ENCODE measurements at regions of chr5 and their contacts with region 1.

Region 1: GRCh38 chr5:132426525-132427138 is 57.1 kb downstream of the SLC22A5 start:
- DNase-seq: peak; percentile 91
- H3K4me3 Mint-ChIP-seq: peak overlapping the region; percentile 81
- H3K27ac Mint-ChIP-seq: peak overlapping the region; percentile 96
- H3K4me1 Mint-ChIP-seq: peaks cover 92% of the 10 kb centered on the region
- H3K27me3 Mint-ChIP-seq: no peaks in the 10 kb centered on the region

Region 2: DNA sequence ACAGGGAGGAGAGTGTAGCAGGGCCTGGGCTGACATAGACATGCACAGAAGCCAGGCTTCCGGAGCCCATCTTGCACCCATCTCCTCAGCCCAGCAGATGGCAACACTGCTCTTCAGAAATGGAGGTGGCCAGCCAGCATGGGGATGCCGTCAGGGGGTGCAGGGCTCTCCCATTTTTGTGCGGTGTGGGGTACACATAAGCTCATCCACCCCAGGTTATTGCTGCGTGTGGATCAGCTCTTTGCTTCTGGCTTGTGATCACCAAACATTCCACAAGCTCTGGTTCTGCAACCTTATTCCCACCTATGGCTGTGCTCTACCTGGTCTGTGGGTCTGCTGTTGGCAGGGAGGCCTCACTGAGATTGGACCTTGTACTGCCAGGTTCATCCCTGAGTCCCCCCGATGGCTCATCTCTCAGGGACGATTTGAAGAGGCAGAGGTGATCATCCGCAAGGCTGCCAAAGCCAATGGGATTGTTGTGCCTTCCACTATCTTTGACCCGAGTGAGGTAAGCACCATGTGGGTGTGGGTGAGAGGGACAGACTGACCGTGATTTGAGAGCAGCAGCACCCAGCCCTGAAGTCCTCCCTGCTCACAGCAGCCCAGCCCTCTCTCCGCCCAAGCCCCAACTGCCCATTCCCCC is 39.9 kb before region 1 on chr5:
- intact Hi-C with region 1: loop called (anchors 1 kb)
- DNase-seq: peak; percentile 93
- H3K4me3 Mint-ChIP-seq: no peak overlapping the region
- H3K27ac Mint-ChIP-seq: no peak overlapping the region
- H3K4me1 Mint-ChIP-seq: peaks cover 51% of the 10 kb centered on the region
- H3K27me3 Mint-ChIP-seq: no peaks in the 10 kb centered on the region

Region 3: DNA sequence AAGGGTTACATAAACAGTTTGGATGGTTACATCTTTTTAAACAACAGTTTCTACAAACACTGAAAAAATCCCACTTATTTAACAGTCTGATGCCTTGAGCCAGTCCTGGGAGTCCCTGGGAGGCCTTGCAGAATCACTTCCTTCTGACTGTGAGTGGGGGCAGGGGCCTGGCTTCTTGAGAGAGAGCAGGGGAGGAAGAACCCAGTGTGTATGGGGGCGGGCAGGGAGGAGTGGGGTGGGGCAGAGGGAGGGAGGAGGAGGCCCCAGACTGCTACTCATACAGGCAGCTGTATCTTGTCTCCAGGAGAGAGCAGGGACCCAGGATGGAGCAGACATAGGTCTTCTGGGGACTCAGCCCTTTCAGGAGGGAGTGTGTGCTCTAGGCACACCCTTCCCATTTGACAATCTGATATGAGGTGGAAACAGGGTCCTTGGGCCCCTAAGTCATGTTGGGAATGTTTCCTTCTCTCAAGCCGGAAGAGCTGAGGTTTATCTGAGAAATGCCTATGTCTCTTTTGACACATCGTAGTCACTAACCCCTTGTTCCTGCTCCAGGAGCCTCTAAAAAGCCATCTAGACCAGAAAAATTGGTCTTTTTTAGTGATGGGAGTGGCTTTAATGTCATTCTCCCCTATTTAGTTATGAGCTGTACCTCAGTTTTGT is 11.1 kb after region 1 on chr5:
- intact Hi-C with region 1: loop called (anchors 1 kb)
- DNase-seq: peak; percentile 87
- H3K4me3 Mint-ChIP-seq: peak overlapping the region; percentile 61
- H3K27ac Mint-ChIP-seq: peak overlapping the region; percentile 86
- H3K4me1 Mint-ChIP-seq: peaks cover 71% of the 10 kb centered on the region
- H3K27me3 Mint-ChIP-seq: no peaks in the 10 kb centered on the region

Region 4: GRCh38 chr5:132466433-132467286 is 40.0 kb after region 1 on chr5:
- intact Hi-C with region 1: loop called (anchors 1 kb)
- DNase-seq: peak; percentile 93
- H3K4me3 Mint-ChIP-seq: peak overlapping the region; percentile 64
- H3K27ac Mint-ChIP-seq: peak overlapping the region; percentile 80
- H3K4me1 Mint-ChIP-seq: peaks cover 81% of the 10 kb centered on the region
- H3K27me3 Mint-ChIP-seq: no peaks in the 10 kb centered on the region

Region 5: DNA sequence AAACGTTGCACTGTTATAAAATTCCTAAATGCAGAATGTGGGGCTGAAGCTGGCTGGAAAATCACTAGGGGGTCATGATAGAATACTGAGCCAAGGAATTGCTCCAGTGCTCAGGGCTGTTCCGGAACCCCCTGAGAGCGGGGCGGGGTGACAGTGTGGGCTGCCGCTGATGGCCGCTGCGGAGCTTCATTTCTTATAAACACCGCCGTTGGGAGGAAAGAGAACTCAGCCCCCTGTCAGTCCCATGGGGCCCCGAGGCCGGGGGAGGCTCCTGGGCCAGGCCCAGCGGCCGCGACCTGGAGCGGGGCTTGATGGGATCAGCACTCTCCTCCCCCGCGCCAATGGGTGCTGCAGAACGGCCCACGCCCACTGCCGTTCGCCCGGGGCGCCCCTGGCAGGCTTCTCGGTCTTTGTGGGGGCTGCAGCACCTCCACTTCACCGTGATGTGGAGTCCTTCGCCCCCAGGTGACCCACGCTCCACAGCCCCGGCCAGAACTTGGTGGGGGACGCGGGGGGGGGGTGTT is 69.1 kb after region 1 on chr5:
- intact Hi-C with region 1: loop called (anchors 1 kb)
- DNase-seq: peak; percentile 94
- H3K4me3 Mint-ChIP-seq: peak overlapping the region; percentile 89
- H3K27ac Mint-ChIP-seq: peak overlapping the region; percentile 97
- H3K4me1 Mint-ChIP-seq: peaks cover 75% of the 10 kb centered on the region
- H3K27me3 Mint-ChIP-seq: no peaks in the 10 kb centered on the region

Region 6: DNA sequence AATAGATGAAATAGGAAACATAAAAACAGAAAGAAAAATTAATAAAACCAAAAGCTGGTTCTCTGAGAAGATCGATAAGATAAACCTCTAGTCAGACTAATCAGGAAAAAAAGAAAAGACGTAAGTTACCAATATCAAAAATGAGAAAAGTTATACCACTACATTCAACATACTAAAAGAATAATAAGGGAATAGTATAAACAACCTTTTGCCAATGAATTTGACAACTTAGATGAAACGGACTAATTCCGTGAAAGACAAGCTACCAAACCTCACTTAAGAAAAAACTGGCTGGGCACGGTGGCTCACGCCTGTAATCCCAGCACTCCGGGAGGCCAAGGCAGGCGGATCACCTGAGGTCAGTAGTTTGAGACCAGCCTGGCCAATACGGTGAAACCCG is 303.3 kb after region 1 on chr5:
- intact Hi-C with region 1: no loop called
- DNase-seq: no peak
- H3K4me3 Mint-ChIP-seq: no peak overlapping the region
- H3K27ac Mint-ChIP-seq: no peak overlapping the region
- H3K4me1 Mint-ChIP-seq: peaks cover 21% of the 10 kb centered on the region
- H3K27me3 Mint-ChIP-seq: no peaks in the 10 kb centered on the region